Vagina (tissue), 2 donors: ENCODE measurements at regions of chr1 and their contacts with region 1.

Region 1: GRCh38 chr1:45303582-45304310 is 22.9 kb upstream of the HPDL start:
- DNase-seq: peak in 1 of 2 donors; percentile 97
- H3K4me3 ChIP-seq: peak overlapping the region; percentile 58 to 79
- H3K27ac ChIP-seq: peak overlapping the region; percentile 83
- H3K4me1 ChIP-seq: peaks cover 17% of the 10 kb centered on the region
- H3K27me3 ChIP-seq: no peaks in the 10 kb centered on the region
- CTCF ChIP-seq: peak; percentile 27 to 61 (median 58)
- POLR2A ChIP-seq: peak in 1 of 2 donors; percentile 55

Region 2: DNA sequence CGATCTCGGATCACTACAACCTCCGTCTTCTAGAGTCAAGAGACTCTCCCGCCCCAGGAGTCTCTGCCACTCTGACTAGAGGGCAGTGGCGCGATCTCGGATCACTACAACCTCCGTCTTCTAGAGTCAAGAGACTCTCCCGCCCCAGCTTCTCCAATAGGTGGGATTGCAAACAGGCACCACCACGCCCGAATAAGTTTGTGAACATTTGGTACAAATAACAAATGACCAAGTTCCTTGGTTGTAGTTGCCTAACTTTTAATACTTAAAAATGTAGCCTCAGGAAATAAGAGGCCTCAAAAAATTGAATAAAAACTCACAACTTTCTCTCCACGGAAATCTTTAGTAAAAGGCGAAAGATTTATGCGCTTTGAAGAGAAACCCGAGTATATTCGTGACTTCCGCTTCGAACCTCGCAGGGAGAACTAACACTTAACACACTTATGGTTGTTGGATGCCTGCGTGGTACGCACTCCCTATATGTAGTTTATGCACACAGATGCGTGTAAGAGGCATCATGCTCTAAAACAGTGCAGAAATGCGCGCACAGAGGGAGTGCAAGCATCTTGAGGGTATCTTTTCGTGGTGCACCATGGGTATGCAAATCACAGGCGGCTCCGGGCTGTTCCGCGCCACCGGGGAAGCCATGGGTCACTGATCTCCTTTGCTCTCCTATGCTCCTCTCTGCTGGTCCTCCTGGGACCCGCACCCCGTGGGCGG is 484.0 kb before region 1 on chr1:
- intact Hi-C with region 1: loop called (anchors 10 kb)
- DNase-seq: peak in 1 of 2 donors; percentile 95
- H3K4me3 ChIP-seq: peak overlapping the region; percentile 54 to 57
- H3K27ac ChIP-seq: peak overlapping the region; percentile 94
- H3K4me1 ChIP-seq: peaks cover 23% of the 10 kb centered on the region
- H3K27me3 ChIP-seq: no peaks in the 10 kb centered on the region
- CTCF ChIP-seq: no peak
- POLR2A ChIP-seq: peak in 1 of 2 donors; percentile 64

Region 3: GRCh38 chr1:45375104-45376090 is 71.7 kb after region 1 on chr1:
- intact Hi-C with region 1: no loop called
- DNase-seq: no peak
- H3K4me3 ChIP-seq: no peak overlapping the region
- H3K27ac ChIP-seq: no peak overlapping the region
- H3K4me1 ChIP-seq: peaks cover 4% of the 10 kb centered on the region
- H3K27me3 ChIP-seq: no peaks in the 10 kb centered on the region
- CTCF ChIP-seq: no peak
- POLR2A ChIP-seq: no peak